Right ventricle myocardium inferior (tissue), 1 donor: ENCODE measurements at regions of chr2 and their contacts with region 1.

Region 1: GRCh38 chr2:10659898-10660568 is 29.7 kb downstream of the NOL10 start:
- DNase-seq: peak; percentile 64
- ATAC-seq: peak; percentile 76

Region 2: GRCh38 chr2:10122386-10123280 is 537.4 kb before region 1 on chr2 and contains the start of gene RRM2:
- intact Hi-C with region 1: loop called (anchors 5 kb)
- DNase-seq: peak; percentile 96
- ATAC-seq: peak; percentile 92
- total RNA-seq, gene RRM2: 4.2 TPM

Region 3: DNA sequence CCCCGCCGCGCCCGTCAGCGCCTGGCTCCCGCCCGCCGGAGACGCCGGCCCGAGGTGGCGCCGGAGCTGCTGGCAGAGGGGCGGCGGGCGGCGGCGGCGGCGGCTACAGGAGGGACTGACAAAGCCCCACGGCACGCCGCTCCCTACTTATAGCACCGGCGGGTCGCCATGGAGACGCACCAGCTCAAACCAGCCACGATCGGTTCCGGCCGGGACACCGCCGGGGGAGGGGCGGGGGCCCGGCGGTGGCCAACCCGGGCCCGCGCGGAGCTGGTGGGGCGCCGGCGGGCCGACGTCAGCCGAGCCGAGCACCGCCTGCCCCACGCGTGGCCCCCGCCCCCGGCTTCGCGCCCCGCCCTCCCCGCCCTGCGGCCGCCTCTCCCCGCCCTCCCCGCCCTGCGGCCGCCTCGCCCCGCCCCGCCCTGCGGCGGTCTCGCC is 211.8 kb before region 1 on chr2 and contains the start of gene ODC1:
- intact Hi-C with region 1: loop called (anchors 5 kb)
- DNase-seq: peak; percentile 98
- ATAC-seq: peak; percentile 94
- total RNA-seq, gene ODC1: 37.2 TPM

Region 4: DNA sequence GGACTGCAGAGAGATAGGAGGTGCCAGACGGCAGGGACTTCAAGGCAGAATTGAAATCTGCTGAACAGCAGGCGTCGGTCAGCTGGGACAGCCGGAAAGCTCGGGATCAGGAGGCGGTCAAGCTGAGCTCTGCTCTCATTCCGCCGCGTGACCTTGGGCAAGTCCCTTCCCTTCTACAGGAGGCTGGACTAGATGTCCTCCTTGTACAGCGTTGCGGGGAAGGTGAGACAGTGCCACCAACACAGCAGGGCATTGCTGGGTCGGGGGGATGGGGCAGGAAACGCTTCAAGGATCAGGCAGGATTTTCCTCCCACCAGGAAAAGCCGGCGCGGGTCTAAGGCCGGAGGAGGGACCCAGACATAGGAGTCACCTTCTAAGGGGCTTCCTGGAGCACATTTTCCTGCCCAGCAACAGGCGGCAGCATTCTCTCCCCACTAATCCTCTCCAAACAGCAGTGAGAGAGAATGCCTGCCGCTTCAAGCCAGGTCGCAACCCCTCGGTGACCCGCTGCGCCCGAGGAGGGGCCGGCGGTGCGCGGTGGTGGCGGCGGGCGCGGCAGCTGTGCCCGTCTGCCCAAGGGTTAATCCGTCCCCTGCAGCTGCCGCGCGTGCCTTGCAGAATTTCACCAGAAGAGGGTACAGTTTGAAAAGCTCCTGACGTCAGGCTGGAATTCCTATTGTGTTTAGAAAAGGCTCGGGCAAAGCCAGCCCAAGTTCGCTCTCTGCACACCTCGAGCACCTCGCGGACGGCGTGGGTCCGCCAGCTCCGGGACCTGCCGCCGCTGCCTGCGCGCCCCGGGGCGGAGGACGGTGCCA is 251.4 kb after region 1 on chr2 and contains the start of gene KCNF1:
- intact Hi-C with region 1: no loop called
- DNase-seq: peak; percentile 11
- ATAC-seq: peak; percentile 21
- total RNA-seq, gene KCNF1: 0.24 TPM